ENCODE measurements at regions of chr19 and their contacts with region 1.

Region 1: DNA sequence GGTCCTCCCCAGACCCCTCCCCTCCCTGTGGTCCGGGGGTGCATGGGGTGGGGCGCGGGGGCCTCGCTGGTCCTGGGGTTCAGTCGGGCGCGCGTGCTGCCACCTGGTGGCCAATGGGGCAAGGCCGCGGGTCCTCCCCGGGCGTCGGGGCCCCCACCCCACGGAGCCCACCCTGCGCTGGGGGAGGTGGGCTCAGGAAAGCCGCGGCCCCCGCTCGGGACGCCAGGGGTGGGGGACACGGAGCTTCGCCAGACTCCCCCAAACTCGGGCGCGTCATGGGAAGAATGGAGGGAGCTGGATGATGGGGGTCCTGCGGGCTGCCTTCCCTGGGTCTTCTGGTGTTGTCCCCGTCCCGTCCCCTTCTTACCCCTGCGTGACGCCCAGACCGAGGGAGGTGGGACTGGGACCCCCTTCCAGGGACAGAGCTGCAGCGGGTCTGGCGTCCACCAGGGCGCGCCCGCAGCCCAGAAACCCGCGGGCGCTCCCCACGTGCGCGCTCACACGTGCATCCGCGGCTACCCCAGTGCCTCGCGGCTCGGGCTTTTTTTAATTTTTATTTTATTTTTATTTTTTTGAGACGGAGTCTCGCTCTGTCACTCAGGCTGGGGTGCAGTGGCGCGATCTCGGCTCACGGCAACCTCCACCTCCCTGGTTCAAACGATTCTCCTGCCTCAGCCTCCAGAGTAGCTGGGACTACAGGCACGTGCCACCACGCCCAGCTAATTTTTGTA is 19.8 kb upstream of the TCF3 start:
- DNase-seq: peak; percentile 54
- H3K27ac ChIP-seq: 0 out of 2 replicates have a peak overlapping the region, but pooled peaks have one; percentile 9
- CTCF ChIP-seq: peak; percentile 94

Region 2: DNA sequence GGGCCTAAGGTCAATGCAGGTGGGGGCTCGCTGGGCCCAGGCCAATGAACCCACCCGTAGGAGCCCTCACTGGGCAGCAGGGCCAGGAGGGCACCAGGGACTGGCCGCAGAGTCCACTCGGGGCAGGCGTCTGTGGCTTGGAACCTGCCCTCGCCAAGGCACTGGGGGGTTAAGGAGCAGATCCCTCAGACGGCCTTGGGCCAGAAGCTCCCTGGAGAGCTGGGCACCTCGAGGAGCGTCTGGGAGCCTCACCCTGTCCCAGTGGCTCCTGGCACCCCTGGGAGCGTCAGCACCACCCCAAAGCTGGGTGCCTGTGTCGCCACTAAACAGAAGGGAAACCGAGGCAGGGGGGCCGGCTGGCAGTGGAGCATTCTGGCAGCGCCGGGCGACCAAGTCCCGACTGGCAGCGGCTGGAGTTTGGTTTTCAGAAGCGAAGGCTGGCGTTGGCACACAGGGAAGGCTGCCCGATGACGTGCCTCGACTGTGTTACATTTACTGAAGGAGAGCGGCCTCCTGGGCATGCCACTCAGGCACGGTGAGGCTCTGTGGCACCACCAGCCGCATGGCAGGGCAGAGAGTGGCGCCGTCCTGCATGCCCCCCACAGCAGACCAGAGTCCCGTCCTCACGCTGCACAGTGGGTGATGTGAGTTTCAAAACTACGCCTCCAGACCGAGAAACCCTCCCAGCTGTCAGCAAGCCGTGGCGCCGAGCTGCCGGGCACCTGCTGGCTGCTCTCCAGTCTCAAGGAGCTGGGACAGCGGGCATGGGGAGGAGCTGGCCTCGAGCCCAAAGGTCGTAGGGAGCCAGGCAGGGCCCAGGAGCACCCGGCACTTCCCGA is 94.9 kb before region 1 on chr19:
- CTCF ChIA-PET with region 1: no interaction called
- POLR2A ChIA-PET with region 1: no interaction called
- DNase-seq: no peak
- H3K27ac ChIP-seq: peak overlapping the region; percentile 31
- CTCF ChIP-seq: no peak

Region 3: GRCh38 chr19:1605236-1606137 is 66.7 kb before region 1 on chr19 and contains the start of gene UQCR11:
- CTCF ChIA-PET with region 1: interaction called, 16 read pairs
- POLR2A ChIA-PET with region 1: no interaction called
- DNase-seq: peak; percentile 99
- H3K27ac ChIP-seq: peak within 1 kb of the TSS; percentile 94
- CTCF ChIP-seq: peak; percentile 70

Region 4: DNA sequence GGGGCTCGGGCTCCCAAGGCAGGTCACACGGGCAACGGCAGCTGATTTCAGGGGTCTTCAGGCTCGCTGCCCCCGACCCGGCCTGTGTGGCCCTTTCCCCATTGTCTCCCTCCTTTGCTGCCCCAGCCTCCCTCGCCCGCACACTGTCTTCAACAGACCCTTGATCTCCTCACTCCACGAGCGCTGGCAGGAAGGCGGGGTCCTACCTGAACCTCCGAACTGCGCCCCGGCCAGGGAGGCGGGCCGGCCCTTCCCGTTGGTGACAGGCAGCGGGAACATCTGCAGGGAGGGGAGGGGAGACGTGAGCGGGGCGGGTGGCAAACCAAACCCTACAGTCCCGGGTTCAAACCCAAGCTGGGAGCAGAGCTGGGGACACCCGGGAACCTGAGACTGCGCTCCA is 26.1 kb before region 1 on chr19:
- CTCF ChIA-PET with region 1: no interaction called
- POLR2A ChIA-PET with region 1: no interaction called
- DNase-seq: no peak
- H3K27ac ChIP-seq: peak overlapping the region; percentile 93; the same call in 1 of the 2 replicates
- CTCF ChIP-seq: no peak

Region 5: GRCh38 chr19:1704339-1704738 is 32.1 kb after region 1 on chr19:
- CTCF ChIA-PET with region 1: no interaction called
- POLR2A ChIA-PET with region 1: no interaction called
- DNase-seq: no peak
- H3K27ac ChIP-seq: no peak overlapping the region
- CTCF ChIP-seq: no peak

Region 6: DNA sequence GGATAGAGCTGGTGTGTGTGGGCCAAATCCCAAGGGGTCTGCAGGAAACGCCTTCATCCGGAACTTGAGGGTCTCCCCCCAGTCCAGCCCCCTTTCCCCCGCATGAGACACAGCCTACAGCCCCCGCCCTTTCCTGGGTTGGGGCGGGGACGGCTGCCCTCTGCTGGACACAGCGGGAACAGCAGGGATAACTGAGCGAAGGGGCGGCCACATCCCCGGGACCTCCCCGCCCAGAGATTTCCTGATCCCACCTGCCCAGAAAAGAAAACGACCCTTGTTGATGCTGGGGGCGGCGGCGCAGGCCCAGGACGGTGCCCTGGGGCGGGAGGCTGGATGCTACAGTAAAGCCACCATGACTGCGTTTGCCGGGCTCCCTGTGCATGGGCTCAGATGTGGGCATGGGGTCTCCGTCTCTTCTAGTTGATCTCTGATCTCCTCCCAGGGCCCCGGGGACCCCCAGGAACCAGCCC is 95.3 kb after region 1 on chr19:
- CTCF ChIA-PET with region 1: interaction called, 26 read pairs
- POLR2A ChIA-PET with region 1: no interaction called
- DNase-seq: peak; percentile 77
- H3K27ac ChIP-seq: no peak overlapping the region
- CTCF ChIP-seq: peak; percentile 96

Region 7: DNA sequence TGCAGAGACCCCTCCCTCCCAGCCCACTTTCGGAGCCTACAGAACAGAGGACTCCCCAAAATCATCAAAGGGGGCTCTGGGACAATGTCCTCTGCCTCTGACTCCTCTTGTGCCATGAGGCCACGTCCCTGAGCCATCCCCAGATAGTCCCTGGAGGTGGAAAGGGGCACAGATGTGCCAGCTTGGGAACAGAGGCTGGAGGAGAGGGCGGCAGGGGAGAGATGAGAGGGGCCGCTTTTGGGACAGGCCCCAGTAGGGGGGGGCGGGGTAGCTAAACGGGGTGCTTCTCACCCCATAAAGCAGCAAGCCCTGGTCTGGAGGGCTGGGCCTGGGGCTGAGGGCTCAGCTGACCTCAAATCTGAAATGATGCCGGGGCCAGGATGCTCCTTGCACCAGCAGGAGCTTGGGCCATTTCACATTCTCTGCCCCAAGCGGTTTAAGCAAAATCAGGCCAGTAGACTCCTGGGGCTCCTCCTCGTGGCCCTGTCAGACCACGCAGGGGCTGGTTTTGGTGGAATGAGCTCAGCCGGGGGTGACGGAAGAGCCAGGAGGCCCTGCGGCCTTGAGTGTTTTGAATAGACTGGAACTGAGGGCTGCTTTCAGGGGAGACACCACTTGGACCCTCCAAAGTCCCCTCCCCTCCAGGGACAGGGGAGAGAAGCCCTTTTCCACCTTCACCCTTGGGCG is 108.2 kb after region 1 on chr19:
- CTCF ChIA-PET with region 1: interaction called, 10 read pairs
- POLR2A ChIA-PET with region 1: no interaction called
- DNase-seq: no peak
- H3K27ac ChIP-seq: no peak overlapping the region
- CTCF ChIP-seq: no peak

Region 8: DNA sequence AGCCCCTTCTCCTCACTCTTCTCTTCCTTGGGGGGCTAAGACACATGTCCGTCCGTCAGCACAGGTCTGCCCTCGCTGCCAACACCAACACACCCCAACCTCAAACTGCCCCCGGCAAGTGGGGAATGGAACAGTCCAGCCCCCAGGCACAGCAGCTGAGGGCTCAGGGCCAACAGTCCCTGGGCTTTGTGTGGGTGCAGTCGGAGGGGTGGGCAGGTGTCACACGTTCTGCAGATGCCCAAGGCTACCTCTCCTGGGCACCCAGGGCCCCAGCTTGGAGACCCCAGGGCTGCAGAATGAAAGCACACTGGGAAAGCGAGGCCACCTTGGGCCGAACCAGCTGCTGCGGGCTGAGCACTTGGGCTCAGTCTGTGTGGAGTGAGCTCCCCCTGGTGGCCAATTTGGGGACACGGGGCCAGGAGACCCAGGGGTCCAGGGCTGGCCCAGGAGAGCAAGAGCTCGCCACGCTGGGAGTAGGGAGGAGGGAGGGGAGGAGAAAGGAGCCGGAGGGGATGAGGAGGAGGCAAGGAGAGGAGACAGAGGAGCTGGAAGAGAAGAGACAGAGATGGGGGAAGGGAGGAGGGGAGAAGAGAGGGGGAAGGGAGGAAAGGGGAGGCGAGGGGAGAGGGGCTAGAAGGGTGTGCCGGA is 153.8 kb after region 1 on chr19:
- CTCF ChIA-PET with region 1: interaction called, 18 read pairs
- POLR2A ChIA-PET with region 1: no interaction called
- DNase-seq: peak; percentile 76
- H3K27ac ChIP-seq: peak overlapping the region; percentile 42
- CTCF ChIP-seq: peak; percentile 93